ENCODE measurements at regions of chr1 and their contacts with region 1.

Region 1: GRCh38 chr1:100866041-100866900 is 28.4 kb downstream of the EXTL2 start:
- DNase-seq: no peak
- ATAC-seq: no peak

Region 2: DNA sequence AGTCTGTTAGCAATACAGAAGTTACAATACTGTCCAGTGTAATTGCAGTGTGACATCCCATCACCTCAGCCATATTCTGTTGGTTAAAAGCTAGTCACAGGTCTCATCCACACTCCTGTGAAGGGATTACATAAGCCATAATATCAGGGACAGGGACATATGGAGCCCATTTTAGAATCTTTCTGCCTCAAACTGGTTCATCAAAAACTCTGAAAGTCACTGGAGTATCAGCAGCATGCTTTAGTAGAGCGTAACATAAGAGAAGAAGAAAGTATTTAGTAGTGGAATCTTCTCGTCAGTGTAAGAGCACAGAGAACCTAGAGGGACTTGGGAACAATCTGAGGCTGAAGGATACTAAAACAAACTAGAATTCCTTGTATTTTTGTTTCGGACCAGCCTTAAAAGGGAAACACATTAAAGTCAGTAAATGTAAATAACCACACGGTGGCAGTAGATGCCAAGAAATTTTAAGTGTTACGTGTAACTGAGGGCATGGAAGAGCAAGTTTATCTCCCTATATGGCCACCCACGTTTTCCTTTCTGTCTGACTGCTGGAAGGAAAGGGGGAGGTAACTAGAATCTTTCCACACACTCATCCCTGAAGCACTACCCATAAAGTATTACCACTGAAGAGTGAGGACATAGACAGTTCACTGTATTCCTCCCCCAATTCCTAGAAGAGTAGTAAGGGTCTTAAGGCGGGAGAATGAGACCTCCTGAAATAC is 1057.7 kb before region 1 on chr1:
- intact Hi-C with region 1: loop called in 1 of 2 experiments (anchors 10 kb)
- DNase-seq: peak in 1 of 2 donors; percentile 34
- ATAC-seq: peak; percentile 92

Region 3: GRCh38 chr1:100459358-100460114 is 406.7 kb before region 1 on chr1:
- intact Hi-C with region 1: loop called in 1 of 2 experiments (anchors 5 kb)
- DNase-seq: peak; percentile 54 to 73
- ATAC-seq: peak; percentile 85

Region 4: GRCh38 chr1:100606438-100606837 is 259.8 kb before region 1 on chr1:
- intact Hi-C with region 1: loop called in 1 of 2 experiments (anchors 2 kb)
- DNase-seq: peak in 1 of 2 donors; percentile 18
- ATAC-seq: peak; percentile 45

Region 5: GRCh38 chr1:100912019-100912418 is 45.7 kb after region 1 on chr1:
- intact Hi-C with region 1: no loop called
- DNase-seq: no peak
- ATAC-seq: no peak

Measured in left colon (tissue), 2 donors.